ENCODE measurements at regions of chr3 and their contacts with region 1.

Region 1: GRCh38 chr3:11288786-11289682 is 16.8 kb downstream of the ATG7 start:
- DNase-seq: peak; percentile 94
- ATAC-seq: peak; percentile 79
- H3K4me3 ChIP-seq: peak overlapping the region; percentile 55
- H3K27ac ChIP-seq: peak overlapping the region; percentile 97
- H3K4me1 ChIP-seq: peaks cover 61% of the 10 kb centered on the region
- H3K27me3 ChIP-seq: no peaks in the 10 kb centered on the region
- CTCF ChIP-seq: no peak

Region 2: GRCh38 chr3:11145888-11146287 is 143.1 kb before region 1 on chr3:
- CTCF ChIA-PET with region 1: no interaction called
- POLR2A ChIA-PET with region 1: no interaction called
- intact Hi-C with region 1: loop called (anchors 5 kb)
- DNase-seq: peak; percentile 96
- ATAC-seq: peak; percentile 80
- H3K4me3 ChIP-seq: peak overlapping the region; percentile 1; the same call in 1 of the 2 replicates
- H3K27ac ChIP-seq: peak overlapping the region; percentile 90
- H3K4me1 ChIP-seq: peaks cover 34% of the 10 kb centered on the region
- H3K27me3 ChIP-seq: no peaks in the 10 kb centered on the region
- CTCF ChIP-seq: no peak

Region 3: DNA sequence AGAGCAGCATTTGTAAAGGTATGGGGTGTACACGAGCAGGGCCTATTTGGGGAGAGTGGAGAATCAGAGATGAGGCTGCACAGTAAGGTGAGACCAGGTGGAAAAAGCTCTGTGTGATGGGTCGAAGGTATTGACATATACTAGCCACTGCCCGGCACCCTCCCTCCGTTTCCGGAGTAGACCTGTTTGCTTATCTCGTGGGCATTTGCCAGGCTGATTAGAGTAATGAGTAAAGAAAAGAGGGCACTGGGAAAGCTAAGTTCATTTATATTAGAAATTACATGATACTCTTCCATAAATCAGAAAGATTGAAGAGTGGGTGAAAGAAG is 63.0 kb before region 1 on chr3:
- CTCF ChIA-PET with region 1: no interaction called
- POLR2A ChIA-PET with region 1: no interaction called
- intact Hi-C with region 1: no loop called
- DNase-seq: no peak
- ATAC-seq: no peak
- H3K4me3 ChIP-seq: peak overlapping the region; percentile 68
- H3K27ac ChIP-seq: peak overlapping the region; percentile 93
- H3K4me1 ChIP-seq: peaks cover 32% of the 10 kb centered on the region
- H3K27me3 ChIP-seq: no peaks in the 10 kb centered on the region
- CTCF ChIP-seq: no peak

Region 4: DNA sequence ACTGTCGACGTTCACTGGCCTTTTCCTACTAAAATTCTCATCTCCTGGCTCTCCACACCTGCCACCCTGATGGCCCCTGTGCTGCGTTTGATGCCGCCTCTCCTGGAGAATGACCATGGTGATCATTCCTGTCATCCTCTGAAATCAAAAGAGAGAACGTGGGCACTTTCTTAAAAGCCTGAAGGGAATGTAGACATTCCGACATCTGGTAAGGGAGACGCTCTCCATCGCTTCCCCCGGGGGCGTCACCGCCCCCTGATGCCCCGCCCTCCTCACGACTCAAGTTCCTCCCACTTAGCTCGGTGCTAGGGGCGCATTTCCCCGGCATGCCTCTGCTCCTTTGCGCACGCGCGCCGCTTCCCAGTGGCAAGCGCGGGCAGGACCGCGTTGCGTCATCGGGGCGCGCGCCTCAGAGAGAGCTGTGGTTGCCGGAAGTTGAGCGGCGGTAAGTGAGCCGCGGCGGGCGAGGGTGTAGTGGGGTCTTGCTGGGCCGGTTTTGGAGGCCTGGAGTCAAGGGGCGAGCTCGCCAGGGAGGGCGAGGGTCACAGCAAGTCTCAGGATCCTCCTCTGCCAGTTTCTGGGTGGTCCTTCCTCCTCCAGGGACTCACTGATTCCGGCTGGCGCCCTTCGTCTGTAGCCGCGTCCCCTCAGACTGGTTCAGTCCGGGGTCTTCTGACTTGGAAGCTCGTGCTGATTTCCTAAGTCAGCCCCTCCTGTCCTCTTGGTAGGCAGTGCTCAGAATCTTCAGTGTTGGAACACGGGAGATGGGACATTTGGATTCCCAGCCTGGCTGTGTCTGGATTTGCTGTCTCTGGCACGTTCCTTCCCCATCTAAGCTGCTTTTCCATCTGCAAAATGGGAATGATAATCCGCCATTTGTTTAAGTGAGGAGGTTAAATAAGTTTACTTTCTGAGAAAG is 16.8 kb before region 1 on chr3 and contains the start of gene ATG7:
- CTCF ChIA-PET with region 1: interaction called, 4 read pairs
- POLR2A ChIA-PET with region 1: interaction called, 25 read pairs
- intact Hi-C with region 1: loop called (anchors 2 kb)
- DNase-seq: peak; percentile 98
- ATAC-seq: peak; percentile 86
- H3K4me3 ChIP-seq: peak within 1 kb of the TSS; percentile 83
- H3K27ac ChIP-seq: peak within 1 kb of the TSS; percentile 54
- H3K4me1 ChIP-seq: peaks cover 25% of the 10 kb centered on the region
- H3K27me3 ChIP-seq: no peaks in the 10 kb centered on the region
- CTCF ChIP-seq: no peak
- total RNA-seq, gene ATG7: 33.2 and 36.5 TPM in 2 replicates

Measured in PC-3 (cell line).